ENCODE measurements at regions of chr1 and their contacts with region 1.

Region 1: GRCh38 chr1:112715264-112716053 is at the start of gene PPM1J:
- DNase-seq: peak; percentile 97
- H3K4me3 ChIP-seq: peak within 1 kb of the TSS; percentile 40 to 45 (median 42)
- H3K27ac ChIP-seq: no peak within 1 kb of the TSS
- H3K4me1 ChIP-seq: peaks cover 11% of the 10 kb centered on the region
- H3K27me3 ChIP-seq: no peaks in the 10 kb centered on the region
- CTCF ChIP-seq: no peak
- POLR2A ChIP-seq: no peak
- total RNA-seq, gene PPM1J: 1.7 and 2.4 TPM in 2 replicates

Region 2: DNA sequence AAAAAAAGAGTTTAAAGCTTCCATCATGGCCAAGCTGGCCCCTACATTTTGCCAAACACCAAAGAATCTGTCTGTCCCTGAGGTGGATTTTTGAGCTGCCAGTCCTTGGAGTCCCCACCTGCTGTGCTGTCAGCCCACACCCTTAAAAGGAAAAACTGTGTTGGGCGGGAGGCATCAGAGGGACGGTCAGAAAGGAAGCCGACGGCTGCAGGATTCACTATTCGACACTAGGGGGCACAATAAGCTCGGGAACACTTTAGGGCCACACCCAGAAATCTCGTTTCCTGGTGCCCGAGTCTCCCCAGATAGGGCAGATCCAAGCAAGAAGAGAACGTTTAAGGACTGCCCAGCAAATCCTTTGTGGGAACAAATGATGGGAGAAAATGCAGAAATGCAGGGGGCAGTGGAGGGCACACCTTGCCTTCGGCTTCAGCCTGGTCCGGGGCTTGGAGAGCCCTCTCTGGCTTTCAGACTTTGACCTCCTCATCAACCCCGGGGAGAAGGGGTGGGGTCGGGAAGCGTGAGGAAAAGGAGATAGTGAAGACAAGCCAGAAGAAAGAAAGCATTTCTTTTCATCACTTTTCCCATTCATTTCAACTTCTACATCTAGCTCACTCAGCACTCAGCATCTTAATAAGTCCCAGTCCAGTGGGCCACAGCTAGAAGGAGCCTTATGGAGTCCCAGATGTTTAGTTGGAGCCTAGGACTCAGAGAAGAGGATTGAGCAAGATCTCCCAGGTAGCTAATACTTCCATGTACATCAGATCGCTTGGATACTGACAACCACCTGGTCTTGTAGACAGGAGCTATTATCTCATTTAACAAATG is 324.5 kb before region 1 on chr1:
- CTCF ChIA-PET with region 1: interaction called, 12 read pairs
- POLR2A ChIA-PET with region 1: interaction called, 4 read pairs
- dilution Hi-C with region 1: no loop called
- intact Hi-C with region 1: no loop called
- DNase-seq: peak; percentile 91
- H3K4me3 ChIP-seq: peak overlapping the region; percentile 6 to 58 (median 29)
- H3K27ac ChIP-seq: peak overlapping the region; percentile 100
- H3K4me1 ChIP-seq: peaks cover 75% of the 10 kb centered on the region
- H3K27me3 ChIP-seq: no peaks in the 10 kb centered on the region
- CTCF ChIP-seq: peak; percentile 87 to 97
- POLR2A ChIP-seq: peak; percentile 69

Region 3: DNA sequence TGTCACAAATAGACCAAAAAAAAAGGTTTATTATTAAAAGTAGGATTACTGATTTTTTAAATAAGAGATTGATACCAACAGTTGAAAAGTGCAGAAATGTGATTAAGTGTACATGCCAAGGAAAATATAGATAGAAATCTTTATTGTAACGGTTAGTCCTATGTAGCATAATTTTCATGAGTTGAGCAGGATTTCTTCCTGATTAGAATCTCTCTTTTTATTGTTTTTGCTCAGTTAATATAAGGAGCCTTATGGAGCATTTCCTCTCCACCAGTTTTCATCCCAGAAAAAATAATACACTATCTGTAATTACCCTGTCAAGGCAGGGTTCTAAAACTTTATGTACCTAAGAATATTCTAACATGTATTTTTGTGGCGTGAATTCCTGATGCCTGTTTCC is 72.4 kb before region 1 on chr1:
- CTCF ChIA-PET with region 1: no interaction called
- POLR2A ChIA-PET with region 1: no interaction called
- dilution Hi-C with region 1: no loop called
- intact Hi-C with region 1: no loop called
- DNase-seq: peak; percentile 51
- H3K4me3 ChIP-seq: no peak overlapping the region
- H3K27ac ChIP-seq: no peak overlapping the region
- H3K4me1 ChIP-seq: peaks cover 10% of the 10 kb centered on the region
- H3K27me3 ChIP-seq: no peaks in the 10 kb centered on the region
- CTCF ChIP-seq: no peak
- POLR2A ChIP-seq: no peak

Region 4: GRCh38 chr1:112744009-112744578 is 28.6 kb after region 1 on chr1:
- CTCF ChIA-PET with region 1: interaction called, 18 read pairs
- POLR2A ChIA-PET with region 1: no interaction called
- dilution Hi-C with region 1: no loop called
- intact Hi-C with region 1: loop called (anchors 2 kb)
- DNase-seq: peak; percentile 25
- H3K4me3 ChIP-seq: peak overlapping the region; percentile 3 to 25 (median 6)
- H3K27ac ChIP-seq: no peak overlapping the region
- H3K4me1 ChIP-seq: peaks cover 7% of the 10 kb centered on the region
- H3K27me3 ChIP-seq: peaks cover 29 to 36% of the 10 kb centered on the region in 2 experiments
- CTCF ChIP-seq: peak in 1 of 2 donors; percentile 28
- POLR2A ChIP-seq: no peak

Region 5: GRCh38 chr1:112882271-112882744 is 166.8 kb after region 1 on chr1:
- CTCF ChIA-PET with region 1: interaction called, 4 read pairs
- POLR2A ChIA-PET with region 1: no interaction called
- dilution Hi-C with region 1: no loop called
- intact Hi-C with region 1: loop called (anchors 1 kb)
- DNase-seq: no peak
- H3K4me3 ChIP-seq: no peak overlapping the region
- H3K27ac ChIP-seq: no peak overlapping the region
- H3K4me1 ChIP-seq: no peaks in the 10 kb centered on the region
- H3K27me3 ChIP-seq: no peaks in the 10 kb centered on the region
- CTCF ChIP-seq: no peak
- POLR2A ChIP-seq: no peak

Region 6: GRCh38 chr1:113140588-113141446 is 425.4 kb after region 1 on chr1:
- CTCF ChIA-PET with region 1: interaction called, 3 read pairs
- POLR2A ChIA-PET with region 1: no interaction called
- dilution Hi-C with region 1: no loop called
- intact Hi-C with region 1: loop called (anchors 5 kb)
- DNase-seq: peak; percentile 64
- H3K4me3 ChIP-seq: no peak overlapping the region
- H3K27ac ChIP-seq: no peak overlapping the region
- H3K4me1 ChIP-seq: peaks cover 26% of the 10 kb centered on the region
- H3K27me3 ChIP-seq: no peaks in the 10 kb centered on the region
- CTCF ChIP-seq: peak; percentile 77 to 87
- POLR2A ChIP-seq: no peak

Region 7: DNA sequence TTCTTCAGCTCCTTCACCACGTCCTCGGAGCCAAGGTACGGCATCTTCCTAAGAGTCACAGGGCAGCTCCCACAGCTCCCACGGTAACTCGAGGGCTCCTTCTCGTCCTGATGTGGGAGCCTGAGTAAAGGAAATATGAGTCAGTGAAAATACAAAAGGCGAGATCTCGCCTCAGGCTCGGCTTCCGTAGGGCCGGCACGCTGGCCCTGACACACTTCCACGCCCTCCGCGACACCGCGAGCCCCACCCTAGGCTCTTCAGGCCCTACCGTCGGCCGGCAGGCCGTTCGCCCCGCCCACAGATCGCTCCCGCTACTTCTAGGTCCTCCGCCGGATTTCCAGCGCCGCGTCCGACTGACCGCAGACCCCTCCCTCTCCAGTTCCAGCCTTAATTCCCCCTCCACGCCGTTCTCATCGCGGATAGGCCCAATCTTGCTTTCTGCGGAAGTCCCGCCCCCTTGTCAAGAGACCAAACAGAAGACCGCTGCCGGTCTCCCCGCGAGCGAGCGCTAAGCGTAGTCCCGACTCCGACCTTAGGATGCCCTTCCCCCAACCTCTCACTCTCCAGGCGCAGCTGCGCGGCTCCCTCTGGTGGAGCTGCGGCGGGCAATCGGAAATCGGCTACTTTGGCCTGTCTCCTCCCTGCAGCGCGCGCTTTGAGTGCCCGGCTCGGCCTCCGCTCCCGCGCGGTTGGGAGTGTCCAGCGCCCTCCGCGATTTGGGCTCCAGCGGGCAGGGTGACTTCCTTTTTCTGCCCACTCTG is 1189.4 kb after region 1 on chr1 and contains the starts of genes AP4B1 and DCLRE1B:
- CTCF ChIA-PET with region 1: no interaction called
- POLR2A ChIA-PET with region 1: no interaction called
- dilution Hi-C with region 1: no loop called
- intact Hi-C with region 1: loop called (anchors 10 kb)
- DNase-seq: peak; percentile 100
- H3K4me3 ChIP-seq: peak within 1 kb of the TSS; percentile 55 to 86 (median 60)
- H3K27ac ChIP-seq: peak within 1 kb of the TSS; percentile 72
- H3K4me1 ChIP-seq: peaks cover 12% of the 10 kb centered on the region
- H3K27me3 ChIP-seq: no peaks in the 10 kb centered on the region
- CTCF ChIP-seq: peak; percentile 60 to 73
- POLR2A ChIP-seq: peak; percentile 96
- total RNA-seq, gene AP4B1: 29.4 and 33.0 TPM in 2 replicates
- total RNA-seq, gene DCLRE1B: 10.7 and 10.8 TPM in 2 replicates